ENCODE measurements at regions of chr11 and their contacts with region 1.

Region 1: DNA sequence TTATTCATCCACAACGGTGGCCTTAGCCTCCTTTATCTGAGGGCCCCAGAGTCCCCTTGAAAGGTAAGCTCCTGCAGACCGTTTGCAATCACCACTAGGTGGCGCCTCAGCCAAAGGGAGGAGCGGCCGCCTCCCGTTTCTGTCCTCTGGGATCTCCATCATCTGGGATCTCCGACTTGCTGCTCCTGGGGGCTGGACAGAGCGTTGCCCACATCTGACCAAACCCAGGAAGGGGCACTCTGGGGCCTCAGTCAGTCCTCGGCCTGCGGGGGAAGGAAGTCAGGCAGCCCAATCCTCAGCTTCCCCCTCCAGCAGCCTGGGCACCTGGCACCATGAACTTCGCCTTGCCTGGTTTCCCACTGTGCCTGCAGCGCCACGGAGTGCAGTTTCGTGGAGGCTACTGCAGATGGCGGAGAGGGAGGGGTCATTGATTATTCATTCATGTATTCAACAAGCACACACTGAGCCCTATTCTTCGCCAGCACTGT is 23.5 kb downstream of the TP53I11 start:
- DNase-seq: peak; percentile 74
- H3K4me3 ChIP-seq: no peak overlapping the region
- H3K27ac ChIP-seq: no peak overlapping the region
- H3K4me1 ChIP-seq: no peaks in the 10 kb centered on the region
- CTCF ChIP-seq: peak; percentile 93

Region 2: DNA sequence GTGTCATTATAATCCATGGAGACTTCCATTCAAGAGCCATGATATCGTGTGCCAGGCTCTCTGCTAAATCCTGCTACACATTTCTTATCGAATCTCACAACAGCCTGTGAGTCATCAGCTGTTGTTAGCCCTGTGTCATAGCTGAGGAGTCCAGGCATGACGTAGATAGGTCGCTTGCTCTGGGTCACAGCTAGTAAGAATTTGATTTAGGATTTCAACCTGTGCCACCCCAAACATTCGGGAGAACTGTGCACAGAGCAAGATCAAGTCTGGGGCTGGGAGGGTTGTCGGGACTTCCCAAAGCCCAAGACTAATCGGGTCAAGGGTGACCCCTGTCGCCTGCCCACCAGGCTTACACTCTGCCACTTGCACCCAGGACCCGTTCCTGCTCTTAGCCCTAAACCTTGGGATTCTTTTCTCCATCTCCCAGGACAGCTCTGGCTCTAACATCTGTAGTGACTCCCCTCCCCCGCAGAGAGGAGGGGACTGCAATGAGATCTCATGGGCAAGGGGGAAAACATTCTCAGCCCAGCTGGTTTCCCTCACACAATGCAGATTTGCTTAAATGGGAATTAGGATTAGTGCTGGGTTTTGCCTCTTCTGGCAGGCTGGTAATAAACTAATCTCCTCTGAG is 166.2 kb before region 1 on chr11:
- CTCF ChIA-PET with region 1: no interaction called
- POLR2A ChIA-PET with region 1: no interaction called
- intact Hi-C with region 1: no loop called
- DNase-seq: no peak
- H3K4me3 ChIP-seq: no peak overlapping the region
- H3K27ac ChIP-seq: no peak overlapping the region
- H3K4me1 ChIP-seq: no peaks in the 10 kb centered on the region
- CTCF ChIP-seq: no peak

Region 3: GRCh38 chr11:45102810-45103621 is 175.8 kb after region 1 on chr11:
- CTCF ChIA-PET with region 1: interaction called, 12 read pairs
- POLR2A ChIA-PET with region 1: interaction called, 3 read pairs
- intact Hi-C with region 1: loop called (anchors 1 kb)
- DNase-seq: peak; percentile 66
- H3K4me3 ChIP-seq: no peak overlapping the region
- H3K27ac ChIP-seq: no peak overlapping the region
- H3K4me1 ChIP-seq: peaks cover 3% of the 10 kb centered on the region
- CTCF ChIP-seq: peak; percentile 100

Region 4: GRCh38 chr11:45339729-45340519 is 412.7 kb after region 1 on chr11:
- CTCF ChIA-PET with region 1: no interaction called
- POLR2A ChIA-PET with region 1: no interaction called
- intact Hi-C with region 1: loop called (anchors 5 kb)
- DNase-seq: peak; percentile 90
- H3K4me3 ChIP-seq: peak overlapping the region; percentile 66
- H3K27ac ChIP-seq: no peak overlapping the region
- H3K4me1 ChIP-seq: peaks cover 35% of the 10 kb centered on the region
- CTCF ChIP-seq: peak; percentile 87